WTC11 (cell line): ENCODE measurements at regions of chr12 and their contacts with region 1.

Region 1: DNA sequence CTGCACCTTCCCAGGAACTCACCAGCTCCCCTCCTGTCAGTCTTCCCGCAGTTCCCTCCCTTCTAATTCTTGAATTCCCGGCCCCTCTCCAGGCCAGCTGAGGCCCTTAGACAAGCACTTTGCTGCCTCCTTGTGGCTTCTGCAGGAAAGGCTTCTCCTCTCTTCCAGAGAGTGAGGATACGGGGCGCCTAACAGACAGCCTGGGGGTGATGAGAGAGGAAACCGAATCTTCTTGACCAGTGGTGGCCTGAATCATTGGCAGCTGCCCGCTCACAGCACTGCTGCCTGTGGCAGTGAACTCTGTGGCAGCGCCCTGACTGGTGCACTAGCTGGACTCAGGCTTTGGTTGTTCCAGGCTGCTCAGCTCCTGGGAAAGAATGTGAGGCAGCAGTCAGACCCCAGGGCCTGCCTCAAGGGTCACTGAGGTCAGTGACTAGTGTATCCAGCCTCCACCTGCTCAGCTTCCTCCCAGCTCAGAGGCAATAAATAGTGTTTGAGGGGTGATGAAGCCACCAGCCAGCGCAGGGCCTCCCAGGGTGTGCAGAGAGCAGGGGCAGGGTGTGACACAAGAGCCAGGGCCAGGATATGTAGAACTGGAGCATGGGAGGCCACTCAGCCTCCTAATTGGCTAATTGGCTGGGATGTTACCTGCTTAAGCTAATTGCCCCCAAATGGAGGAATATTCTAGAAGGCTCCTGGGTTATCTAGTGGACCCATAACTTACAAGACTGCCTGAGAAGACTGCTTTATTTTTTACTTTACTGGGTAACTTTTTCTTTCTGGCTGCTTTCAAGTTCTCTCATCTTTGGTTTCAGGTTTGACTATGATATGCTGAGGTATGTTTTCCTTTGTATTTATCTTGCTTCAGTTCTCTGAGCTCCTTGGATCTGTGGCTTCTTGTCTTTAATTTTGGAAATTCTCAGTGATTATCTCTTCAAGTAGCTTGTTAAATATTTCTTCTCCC is 12.9 kb upstream of the MCRS1 start:
- DNase-seq: peak; percentile 94
- ATAC-seq: peak; percentile 96
- H3K4me3 Mint-ChIP-seq: no peak overlapping the region
- H3K27ac Mint-ChIP-seq: no peak overlapping the region
- H3K4me1 Mint-ChIP-seq: peaks cover 8% of the 10 kb centered on the region
- H3K27me3 Mint-ChIP-seq: no peaks in the 10 kb centered on the region
- CTCF ChIP-seq: peak; percentile 66

Region 2: GRCh38 chr12:49296034-49296835 is 284.6 kb before region 1 on chr12:
- CTCF ChIA-PET with region 1: interaction called, 11 read pairs
- POLR2A ChIA-PET with region 1: no interaction called
- DNase-seq: peak; percentile 84
- ATAC-seq: peak; percentile 58
- H3K4me3 Mint-ChIP-seq: peak overlapping the region; percentile 67
- H3K27ac Mint-ChIP-seq: no peak overlapping the region
- H3K4me1 Mint-ChIP-seq: peaks cover 30% of the 10 kb centered on the region
- H3K27me3 Mint-ChIP-seq: peaks cover 91% of the 10 kb centered on the region
- CTCF ChIP-seq: peak; percentile 88

Region 3: GRCh38 chr12:49358483-49359141 is 222.2 kb before region 1 on chr12:
- CTCF ChIA-PET with region 1: interaction called, 42 read pairs
- POLR2A ChIA-PET with region 1: no interaction called
- DNase-seq: peak; percentile 67
- ATAC-seq: peak; percentile 99
- H3K4me3 Mint-ChIP-seq: no peak overlapping the region
- H3K27ac Mint-ChIP-seq: no peak overlapping the region
- H3K4me1 Mint-ChIP-seq: no peaks in the 10 kb centered on the region
- H3K27me3 Mint-ChIP-seq: peaks cover 3% of the 10 kb centered on the region; the same call in 1 of the 2 replicates
- CTCF ChIP-seq: peak; percentile 65

Region 4: DNA sequence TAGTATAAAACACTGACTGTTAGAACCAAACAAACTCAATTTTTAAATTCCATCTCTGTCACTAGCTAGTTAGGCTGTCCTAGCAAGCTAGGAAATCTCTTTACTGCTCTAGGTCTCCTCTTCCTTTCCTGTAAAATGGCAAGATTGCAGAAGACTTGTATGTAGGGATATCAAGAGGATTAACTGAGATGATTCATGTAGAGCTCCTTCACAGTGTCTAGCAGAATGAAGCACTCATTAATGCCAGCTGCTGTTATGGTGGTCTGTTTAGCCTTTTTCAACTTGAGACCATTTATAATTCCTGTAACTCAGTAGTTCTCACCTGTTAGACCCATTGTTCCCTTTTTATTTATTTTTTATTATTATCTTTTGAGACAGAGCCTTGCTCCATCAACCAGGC is 109.9 kb before region 1 on chr12:
- CTCF ChIA-PET with region 1: no interaction called
- POLR2A ChIA-PET with region 1: no interaction called
- DNase-seq: no peak
- ATAC-seq: no peak
- H3K4me3 Mint-ChIP-seq: no peak overlapping the region
- H3K27ac Mint-ChIP-seq: no peak overlapping the region
- H3K4me1 Mint-ChIP-seq: peaks cover 6% of the 10 kb centered on the region
- H3K27me3 Mint-ChIP-seq: no peaks in the 10 kb centered on the region
- CTCF ChIP-seq: no peak

Region 5: DNA sequence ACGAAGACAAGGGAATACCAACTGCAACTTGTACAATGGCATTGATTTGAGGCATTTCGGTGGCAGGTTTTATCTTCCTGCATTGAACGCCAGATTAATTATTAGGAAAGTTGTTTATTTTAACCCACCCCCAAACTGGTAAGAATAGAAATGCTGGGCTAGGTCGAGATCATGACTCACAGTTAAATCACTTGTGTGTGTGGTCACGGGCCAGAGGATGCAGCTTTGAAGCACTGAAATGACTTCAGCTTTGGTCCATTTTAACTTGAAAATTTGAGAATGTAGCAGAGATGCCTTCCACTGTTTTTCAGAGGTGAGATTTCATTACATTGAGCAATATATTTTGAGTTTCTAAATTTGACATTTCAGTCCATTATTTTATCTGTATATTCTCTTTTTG is 65.6 kb before region 1 on chr12:
- CTCF ChIA-PET with region 1: interaction called, 10 read pairs
- POLR2A ChIA-PET with region 1: no interaction called
- DNase-seq: no peak
- ATAC-seq: no peak
- H3K4me3 Mint-ChIP-seq: no peak overlapping the region
- H3K27ac Mint-ChIP-seq: no peak overlapping the region; the same call in 1 of the 2 replicates
- H3K4me1 Mint-ChIP-seq: no peaks in the 10 kb centered on the region
- H3K27me3 Mint-ChIP-seq: no peaks in the 10 kb centered on the region
- CTCF ChIP-seq: no peak

Region 6: GRCh38 chr12:49543914-49544815 is 36.7 kb before region 1 on chr12:
- CTCF ChIA-PET with region 1: interaction called, 99 read pairs
- POLR2A ChIA-PET with region 1: no interaction called
- DNase-seq: peak; percentile 47
- ATAC-seq: peak; percentile 41
- H3K4me3 Mint-ChIP-seq: peak overlapping the region; percentile 68
- H3K27ac Mint-ChIP-seq: no peak overlapping the region
- H3K4me1 Mint-ChIP-seq: peaks cover 32% of the 10 kb centered on the region
- H3K27me3 Mint-ChIP-seq: peaks cover 100% of the 10 kb centered on the region
- CTCF ChIP-seq: no peak

Region 7: DNA sequence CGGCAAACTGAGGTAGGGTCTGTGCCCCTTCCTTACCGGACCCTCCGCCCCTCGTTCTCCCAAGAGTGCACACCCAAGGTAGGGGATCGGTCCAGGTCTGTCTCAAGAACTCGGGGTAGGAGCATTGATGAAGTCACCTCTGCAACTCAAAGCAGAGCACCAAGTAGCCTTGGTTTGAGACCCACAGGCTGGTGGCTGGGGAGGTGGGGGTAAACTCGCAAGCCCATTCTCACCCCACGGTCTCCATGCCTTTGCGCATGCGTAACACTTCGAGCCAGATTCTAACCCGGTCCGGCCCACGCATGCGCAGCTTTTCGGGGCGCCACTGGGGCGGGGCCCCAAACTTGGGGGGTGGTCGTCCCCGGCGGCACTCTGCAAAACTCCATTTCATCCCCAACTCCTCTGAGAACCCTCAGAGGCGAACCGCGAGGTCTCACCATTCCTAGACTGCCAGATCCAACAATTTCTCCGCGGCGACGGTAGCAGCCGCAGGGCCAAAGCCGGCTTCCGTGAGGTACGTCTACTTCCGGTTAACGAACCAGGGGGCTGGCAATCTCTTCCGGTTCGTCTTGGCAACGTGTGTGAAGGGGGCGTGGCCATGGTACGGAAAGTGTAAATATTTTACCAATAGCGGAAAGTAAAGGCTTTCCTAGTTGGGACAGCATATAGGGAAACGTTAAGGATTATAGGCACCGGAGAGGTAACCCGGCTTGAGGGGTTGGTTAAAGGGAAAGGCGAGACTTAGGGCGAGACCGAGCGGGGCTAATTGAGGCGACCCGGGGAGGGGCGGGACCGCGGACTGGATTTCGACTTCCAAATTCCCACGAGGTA is 13.0 kb before region 1 on chr12 and contains the start of gene MCRS1:
- CTCF ChIA-PET with region 1: interaction called, 17 read pairs
- POLR2A ChIA-PET with region 1: interaction called, 5 read pairs
- DNase-seq: peak; percentile 81
- ATAC-seq: peak; percentile 74
- H3K4me3 Mint-ChIP-seq: peak within 1 kb of the TSS; percentile 98
- H3K27ac Mint-ChIP-seq: peak within 1 kb of the TSS; percentile 99
- H3K4me1 Mint-ChIP-seq: peaks cover 12% of the 10 kb centered on the region
- H3K27me3 Mint-ChIP-seq: no peaks in the 10 kb centered on the region
- CTCF ChIP-seq: no peak
- total RNA-seq, gene MCRS1: 94.8 to 105 TPM (median 96.5 TPM) in 3 replicates

Region 8: DNA sequence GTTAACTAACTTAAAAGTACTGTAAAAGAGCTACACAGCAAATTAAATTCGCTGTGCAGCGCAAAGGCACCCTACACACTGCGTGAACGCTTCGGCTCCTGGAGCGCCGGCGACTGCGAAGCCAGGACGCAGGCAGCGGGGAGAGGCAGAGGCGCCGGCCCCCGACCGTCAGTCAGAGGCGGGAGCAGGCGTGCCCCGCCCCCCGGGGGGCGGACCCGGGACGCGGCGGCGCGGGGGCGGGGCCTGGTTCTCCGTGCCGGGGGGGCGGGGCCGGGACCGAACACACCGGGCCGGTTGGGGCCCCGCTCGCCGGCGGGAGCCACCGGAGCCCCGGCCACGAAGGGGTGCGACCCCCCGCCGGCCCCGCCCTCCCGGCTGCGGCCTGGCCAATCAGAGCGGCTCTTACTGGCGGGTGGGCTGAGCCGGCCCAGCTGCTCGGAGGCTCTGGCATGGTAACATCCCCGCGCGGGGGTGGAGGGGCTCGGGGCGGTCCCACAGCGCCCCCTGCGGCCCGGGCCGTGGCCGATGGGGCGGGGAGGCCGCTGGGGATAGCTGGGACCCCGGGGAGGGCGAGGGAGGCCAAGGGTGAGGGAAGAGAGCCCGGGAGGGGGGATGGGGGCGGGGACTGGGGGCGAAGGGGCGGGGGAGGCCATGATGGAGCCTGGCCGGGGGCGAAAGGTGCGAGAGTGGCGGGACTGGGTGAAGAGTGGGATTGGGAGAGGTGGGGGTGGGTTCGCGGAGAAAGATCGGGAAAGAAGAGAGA is 42.5 kb after region 1 on chr12 and contains the start of gene PRPF40B:
- CTCF ChIA-PET with region 1: interaction called, 21 read pairs
- POLR2A ChIA-PET with region 1: no interaction called
- DNase-seq: peak; percentile 92
- ATAC-seq: peak; percentile 84
- H3K4me3 Mint-ChIP-seq: peak within 1 kb of the TSS; percentile 90
- H3K27ac Mint-ChIP-seq: peak within 1 kb of the TSS; percentile 92
- H3K4me1 Mint-ChIP-seq: peaks cover 35% of the 10 kb centered on the region
- H3K27me3 Mint-ChIP-seq: no peaks in the 10 kb centered on the region
- CTCF ChIP-seq: peak; percentile 47; the same call in 1 of the 2 replicates
- total RNA-seq, gene PRPF40B: 38.0 to 46.0 TPM (median 40.5 TPM) in 3 replicates

Region 9: GRCh38 chr12:49708833-49709232 is 128.0 kb after region 1 on chr12:
- CTCF ChIA-PET with region 1: no interaction called
- POLR2A ChIA-PET with region 1: no interaction called
- DNase-seq: no peak
- ATAC-seq: no peak
- H3K4me3 Mint-ChIP-seq: no peak overlapping the region
- H3K27ac Mint-ChIP-seq: no peak overlapping the region
- H3K4me1 Mint-ChIP-seq: peaks cover 23% of the 10 kb centered on the region
- H3K27me3 Mint-ChIP-seq: peaks cover 45% of the 10 kb centered on the region
- CTCF ChIP-seq: no peak